Sigmoid colon (tissue), 7 donors: ENCODE measurements at regions of chr11 and their contacts with region 1.

Region 1: DNA sequence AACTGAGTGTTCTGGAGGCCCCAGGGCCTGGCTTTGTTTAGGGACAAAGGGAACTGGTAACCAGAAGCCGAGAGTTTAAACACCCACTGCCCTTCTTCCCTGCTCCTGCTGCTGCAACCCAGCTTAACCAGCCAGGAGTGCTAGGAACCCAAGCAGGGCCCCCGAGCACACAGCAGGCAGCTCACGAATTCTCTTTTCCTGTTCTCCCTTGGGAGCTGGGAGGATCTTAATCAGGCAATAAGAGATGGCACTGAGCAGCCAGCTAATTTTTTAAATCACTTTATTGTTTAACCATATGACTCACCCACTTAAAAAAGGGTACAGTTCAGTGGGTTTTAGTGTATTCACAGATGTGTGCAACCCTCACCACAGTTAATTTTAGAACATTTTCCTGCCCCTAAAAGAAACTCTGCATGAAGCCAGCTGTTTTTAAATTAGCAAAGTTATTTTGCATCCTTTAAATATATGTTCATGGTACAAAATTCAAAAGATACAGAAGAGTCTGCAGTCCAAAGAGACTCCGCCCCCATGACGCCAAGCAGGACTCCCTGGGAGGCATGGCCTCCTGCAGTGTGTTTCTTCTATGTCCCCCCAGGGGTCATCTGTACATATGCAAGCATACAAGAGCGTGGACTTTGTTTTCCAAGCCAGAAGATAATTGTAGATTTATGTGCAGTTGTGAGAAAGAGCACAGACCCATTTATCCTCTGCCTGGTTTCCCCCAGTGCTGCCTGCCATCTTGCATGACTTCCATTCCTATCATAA is 18.9 kb upstream of the PPP6R3 start:
- DNase-seq: no peak
- H3K4me3 ChIP-seq: no peak overlapping the region
- H3K27ac ChIP-seq: peak overlapping the region in 3 of 4 donors; percentile 18 to 51 (median 44)
- H3K4me1 ChIP-seq: peaks cover 0 to 53% (median 29%) of the 10 kb centered on the region in 4 donors
- H3K27me3 ChIP-seq: no peaks in the 10 kb centered on the region
- CTCF ChIP-seq: no peak
- EP300 ChIP-seq: no peak
- POLR2A ChIP-seq: no peak

Region 2: GRCh38 chr11:67983951-67984350 is 457.7 kb before region 1 on chr11:
- intact Hi-C with region 1: no loop called
- DNase-seq: peak; percentile 35
- H3K4me3 ChIP-seq: no peak overlapping the region
- H3K27ac ChIP-seq: no peak overlapping the region
- H3K4me1 ChIP-seq: no peaks in the 10 kb centered on the region
- H3K27me3 ChIP-seq: no peaks in the 10 kb centered on the region
- CTCF ChIP-seq: no peak
- EP300 ChIP-seq: no peak
- POLR2A ChIP-seq: no peak

Region 3: DNA sequence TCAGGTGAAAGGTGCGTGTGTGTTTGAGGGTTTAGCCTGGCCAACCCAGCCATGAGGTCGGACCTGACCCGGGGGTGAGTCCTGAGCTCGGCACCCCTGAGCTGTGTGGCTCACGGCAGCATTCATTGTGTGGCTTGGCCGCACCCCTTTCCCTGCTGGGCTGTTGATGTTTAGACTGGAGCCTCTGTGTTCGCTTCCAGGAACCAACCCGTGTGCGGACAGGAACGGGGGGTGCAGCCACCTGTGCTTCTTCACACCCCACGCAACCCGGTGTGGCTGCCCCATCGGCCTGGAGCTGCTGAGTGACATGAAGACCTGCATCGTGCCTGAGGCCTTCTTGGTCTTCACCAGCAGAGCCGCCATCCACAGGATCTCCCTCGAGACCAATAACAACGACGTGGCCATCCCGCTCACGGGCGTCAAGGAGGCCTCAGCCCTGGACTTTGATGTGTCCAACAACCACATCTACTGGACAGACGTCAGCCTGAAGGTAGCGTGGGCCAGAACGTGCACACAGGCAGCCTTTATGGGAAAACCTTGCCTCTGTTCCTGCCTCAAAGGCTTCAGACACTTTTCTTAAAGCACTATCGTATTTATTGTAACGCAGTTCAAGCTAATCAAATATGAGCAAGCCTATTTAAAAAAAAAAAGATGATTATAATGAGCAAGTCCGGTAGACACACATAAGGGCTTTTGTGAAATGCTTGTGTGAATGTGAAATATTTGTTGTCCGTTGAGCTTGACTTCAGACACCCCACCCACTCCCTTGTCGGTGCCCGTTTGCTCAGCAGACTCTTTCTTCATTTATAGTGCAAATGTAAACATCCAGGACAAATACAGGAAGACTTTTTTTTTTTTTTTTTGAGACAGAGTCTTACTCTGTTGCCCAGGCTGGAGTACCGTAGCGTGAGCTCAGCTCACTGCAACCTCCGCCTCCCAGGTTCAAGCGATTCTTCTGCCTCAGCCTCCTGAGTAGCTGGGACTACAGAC is 35.0 kb before region 1 on chr11:
- intact Hi-C with region 1: loop called (anchors 5 kb)
- DNase-seq: no peak
- H3K4me3 ChIP-seq: no peak overlapping the region
- H3K27ac ChIP-seq: peak overlapping the region; percentile 28 to 73 (median 36)
- H3K4me1 ChIP-seq: peaks cover 0 to 15% (median 11%) of the 10 kb centered on the region in 4 donors
- H3K27me3 ChIP-seq: no peaks in the 10 kb centered on the region
- CTCF ChIP-seq: no peak
- EP300 ChIP-seq: no peak
- POLR2A ChIP-seq: no peak

Region 4: GRCh38 chr11:68488623-68489022 is 47.0 kb after region 1 on chr11:
- intact Hi-C with region 1: no loop called
- DNase-seq: no peak
- H3K4me3 ChIP-seq: no peak overlapping the region
- H3K27ac ChIP-seq: no peak overlapping the region
- H3K4me1 ChIP-seq: peaks cover 2 to 43% (median 13%) of the 10 kb centered on the region in 4 donors
- H3K27me3 ChIP-seq: no peaks in the 10 kb centered on the region
- CTCF ChIP-seq: no peak
- EP300 ChIP-seq: no peak
- POLR2A ChIP-seq: no peak

Region 5: GRCh38 chr11:68506908-68507307 is 65.3 kb after region 1 on chr11:
- intact Hi-C with region 1: no loop called
- DNase-seq: no peak
- H3K4me3 ChIP-seq: no peak overlapping the region
- H3K27ac ChIP-seq: peak overlapping the region in 2 of 4 donors; percentile 7 to 73
- H3K4me1 ChIP-seq: peaks cover 5 to 99% (median 92%) of the 10 kb centered on the region in 4 donors
- H3K27me3 ChIP-seq: no peaks in the 10 kb centered on the region
- CTCF ChIP-seq: no peak
- EP300 ChIP-seq: no peak
- POLR2A ChIP-seq: no peak